ENCODE measurements at regions of chr16 and their contacts with region 1.

Region 1: GRCh38 chr16:68499006-68499405 is 40.1 kb upstream of the ZFP90 start:
- DNase-seq: no peak
- H3K4me3 ChIP-seq: no peak overlapping the region
- H3K27ac ChIP-seq: no peak overlapping the region
- H3K4me1 ChIP-seq: no peaks in the 10 kb centered on the region
- H3K27me3 ChIP-seq: no peaks in the 10 kb centered on the region
- CTCF ChIP-seq: no peak
- EP300 ChIP-seq: no peak
- POLR2A ChIP-seq: no peak

Region 2: DNA sequence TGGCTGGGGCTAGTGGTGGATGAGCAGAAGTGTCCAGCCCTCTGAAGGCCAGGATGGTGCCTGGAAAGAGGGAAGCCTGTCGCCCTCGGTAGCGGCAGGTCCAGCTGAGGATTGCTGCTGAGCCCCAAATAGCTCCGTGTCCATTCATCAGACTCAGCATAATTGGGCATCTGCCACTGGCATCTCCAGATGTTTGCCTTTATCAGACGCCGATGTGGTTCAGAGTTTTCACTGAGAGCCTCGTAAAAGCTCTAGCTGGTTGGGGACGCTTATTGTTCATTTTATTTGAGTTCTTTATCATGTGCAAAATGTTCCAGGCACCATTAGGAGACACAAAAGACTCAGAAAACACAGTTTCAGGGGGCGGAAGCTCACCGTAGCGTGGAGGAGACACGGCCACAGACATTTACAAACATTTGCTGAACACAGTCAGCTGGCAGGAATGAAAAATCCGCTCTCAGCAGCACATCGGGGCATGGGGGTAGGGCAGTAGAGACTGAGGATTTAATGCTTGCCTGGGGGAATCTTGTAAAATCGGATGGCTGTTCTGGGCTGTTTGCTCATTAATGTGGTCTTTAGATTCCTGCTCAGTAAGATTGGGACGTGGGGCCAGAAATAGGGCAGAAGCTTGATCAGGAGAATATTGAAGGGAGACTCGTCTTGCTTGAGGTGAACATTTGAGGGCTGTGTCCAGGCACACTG is 92.4 kb before region 1 on chr16:
- in situ Hi-C with region 1: loop called in 1 of 4 experiments (anchors 10 kb)
- intact Hi-C with region 1: no loop called
- DNase-seq: no peak
- H3K4me3 ChIP-seq: no peak overlapping the region
- H3K27ac ChIP-seq: no peak overlapping the region
- H3K4me1 ChIP-seq: peaks cover 0 to 6% (median 0%) of the 10 kb centered on the region in 4 donors
- H3K27me3 ChIP-seq: no peaks in the 10 kb centered on the region
- CTCF ChIP-seq: no peak
- EP300 ChIP-seq: no peak
- POLR2A ChIP-seq: no peak

Region 3: DNA sequence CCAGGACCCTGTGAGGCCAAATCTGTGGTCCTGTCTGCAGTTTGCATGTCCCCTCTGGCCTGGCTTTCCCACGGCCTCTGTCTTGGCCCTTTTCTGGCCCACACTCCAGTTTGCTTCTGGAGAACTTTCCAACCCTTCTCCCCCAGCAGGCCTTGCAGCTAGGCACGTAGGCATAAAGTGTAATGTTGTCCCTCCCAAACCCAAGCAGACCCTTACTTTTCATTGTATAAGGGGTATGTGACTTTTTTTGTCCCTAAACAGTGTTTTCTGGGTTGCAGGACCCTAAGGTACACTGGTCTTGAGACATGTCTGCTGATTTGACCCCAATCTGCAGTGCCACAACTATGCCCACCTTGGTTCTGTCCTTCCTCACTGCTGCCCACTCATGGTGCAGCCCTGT is 35.1 kb before region 1 on chr16:
- in situ Hi-C with region 1: no loop called
- intact Hi-C with region 1: loop called (anchors 1 kb)
- DNase-seq: no peak
- H3K4me3 ChIP-seq: no peak overlapping the region
- H3K27ac ChIP-seq: no peak overlapping the region
- H3K4me1 ChIP-seq: peaks cover 0 to 7% (median 6%) of the 10 kb centered on the region in 4 donors
- H3K27me3 ChIP-seq: no peaks in the 10 kb centered on the region
- CTCF ChIP-seq: no peak
- EP300 ChIP-seq: no peak
- POLR2A ChIP-seq: no peak

Region 4: GRCh38 chr16:68528686-68529379 is 29.8 kb after region 1 on chr16:
- in situ Hi-C with region 1: no loop called
- intact Hi-C with region 1: no loop called
- DNase-seq: peak; percentile 91
- H3K4me3 ChIP-seq: peak overlapping the region in 1 of 4 donors; percentile 25
- H3K27ac ChIP-seq: peak overlapping the region in 2 of 4 donors; percentile 1 to 28
- H3K4me1 ChIP-seq: peaks cover 4 to 20% (median 18%) of the 10 kb centered on the region in 4 donors
- H3K27me3 ChIP-seq: no peaks in the 10 kb centered on the region
- CTCF ChIP-seq: peak; percentile 90 to 95 (median 93)
- EP300 ChIP-seq: no peak
- POLR2A ChIP-seq: no peak